ENCODE measurements at regions of chrX and their contacts with region 1.

Region 1: GRCh38 chrX:71181910-71182799 is 37.5 kb downstream of the NLGN3 start:
- DNase-seq: peak; percentile 92
- H3K4me3 ChIP-seq: peak overlapping the region; percentile 44 to 52 (median 46)
- H3K27ac ChIP-seq: peak overlapping the region; percentile 71
- H3K4me1 ChIP-seq: no peaks in the 10 kb centered on the region
- H3K27me3 ChIP-seq: no peaks in the 10 kb centered on the region
- CTCF ChIP-seq: no peak

Region 2: GRCh38 chrX:69948276-69948797 is 1233.8 kb before region 1 on chrX:
- CTCF ChIA-PET with region 1: no interaction called
- dilution Hi-C with region 1: no loop called
- in situ Hi-C with region 1: no loop called
- intact Hi-C with region 1: no loop called
- DNase-seq: no peak
- H3K4me3 ChIP-seq: no peak overlapping the region
- H3K27ac ChIP-seq: no peak overlapping the region
- H3K4me1 ChIP-seq: no peaks in the 10 kb centered on the region
- H3K27me3 ChIP-seq: no peaks in the 10 kb centered on the region
- CTCF ChIP-seq: no peak

Region 3: GRCh38 chrX:70454441-70455365 is 727.5 kb before region 1 on chrX:
- CTCF ChIA-PET with region 1: no interaction called
- dilution Hi-C with region 1: no loop called
- in situ Hi-C with region 1: no loop called
- intact Hi-C with region 1: loop called (anchors 10 kb)
- DNase-seq: peak; percentile 77
- H3K4me3 ChIP-seq: peak overlapping the region; percentile 47 to 63 (median 58)
- H3K27ac ChIP-seq: no peak overlapping the region
- H3K4me1 ChIP-seq: peaks cover 12% of the 10 kb centered on the region
- H3K27me3 ChIP-seq: no peaks in the 10 kb centered on the region
- CTCF ChIP-seq: peak; percentile 87 to 89

Region 4: DNA sequence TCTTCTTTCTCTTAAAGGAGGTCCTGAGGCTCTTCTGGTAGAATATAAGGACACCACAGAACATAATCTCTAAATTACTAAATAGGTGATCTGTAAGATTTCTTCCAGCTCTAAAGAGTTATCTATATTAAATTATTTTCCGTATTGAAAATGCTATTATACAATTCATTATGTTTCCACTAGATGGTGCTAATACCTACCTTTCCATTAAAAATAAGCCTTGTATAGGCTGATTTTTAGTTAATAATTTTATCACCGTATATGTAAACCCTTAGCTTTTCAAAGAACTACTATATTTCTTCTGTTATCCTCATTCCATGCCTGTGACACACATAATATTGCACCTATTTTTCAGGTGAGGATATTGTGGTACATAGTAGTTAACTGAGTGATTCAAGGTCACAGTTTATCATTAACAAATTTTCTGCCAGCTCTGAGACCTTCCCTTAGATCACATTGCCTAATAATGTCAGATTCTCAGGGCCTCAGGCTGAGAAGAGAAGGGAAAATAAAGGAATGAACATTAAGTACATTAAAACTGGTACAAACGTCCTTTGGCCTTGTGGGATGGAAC is 412.4 kb before region 1 on chrX:
- CTCF ChIA-PET with region 1: no interaction called
- dilution Hi-C with region 1: no loop called
- in situ Hi-C with region 1: loop called in 1 of 2 experiments (anchors 25 kb)
- intact Hi-C with region 1: loop called (anchors 1 kb)
- DNase-seq: no peak
- H3K4me3 ChIP-seq: no peak overlapping the region
- H3K27ac ChIP-seq: no peak overlapping the region
- H3K4me1 ChIP-seq: no peaks in the 10 kb centered on the region
- H3K27me3 ChIP-seq: no peaks in the 10 kb centered on the region
- CTCF ChIP-seq: peak; percentile 37 to 43

Region 5: DNA sequence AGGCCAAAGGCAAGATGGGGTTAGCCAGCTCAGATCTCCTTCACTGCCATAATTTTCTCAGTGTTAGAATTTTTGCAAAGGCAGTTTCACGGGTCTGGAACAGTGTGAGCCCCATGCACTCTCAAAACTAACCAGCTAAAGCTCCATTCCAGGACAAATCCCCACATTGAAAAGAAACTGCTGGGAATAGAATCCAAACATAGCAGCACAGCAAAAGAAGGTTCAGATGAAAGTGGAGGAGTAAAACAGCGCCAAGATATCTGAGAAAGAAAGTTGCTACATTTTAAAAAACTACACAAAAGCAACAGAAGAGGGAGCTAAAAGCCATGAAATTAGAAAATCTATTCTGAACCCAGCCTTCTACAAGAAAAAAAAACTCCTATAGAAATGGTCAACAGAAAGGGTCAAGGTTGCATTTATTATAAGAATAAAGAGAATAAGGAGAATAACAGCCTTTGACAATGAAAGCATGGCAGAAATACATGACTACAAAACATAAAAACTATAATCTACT is 211.6 kb before region 1 on chrX:
- CTCF ChIA-PET with region 1: no interaction called
- dilution Hi-C with region 1: no loop called
- in situ Hi-C with region 1: loop called in 1 of 2 experiments (anchors 25 kb)
- intact Hi-C with region 1: loop called (anchors 1 kb)
- DNase-seq: peak; percentile 7
- H3K4me3 ChIP-seq: no peak overlapping the region
- H3K27ac ChIP-seq: no peak overlapping the region
- H3K4me1 ChIP-seq: no peaks in the 10 kb centered on the region
- H3K27me3 ChIP-seq: no peaks in the 10 kb centered on the region
- CTCF ChIP-seq: peak; percentile 28 to 29

Region 6: DNA sequence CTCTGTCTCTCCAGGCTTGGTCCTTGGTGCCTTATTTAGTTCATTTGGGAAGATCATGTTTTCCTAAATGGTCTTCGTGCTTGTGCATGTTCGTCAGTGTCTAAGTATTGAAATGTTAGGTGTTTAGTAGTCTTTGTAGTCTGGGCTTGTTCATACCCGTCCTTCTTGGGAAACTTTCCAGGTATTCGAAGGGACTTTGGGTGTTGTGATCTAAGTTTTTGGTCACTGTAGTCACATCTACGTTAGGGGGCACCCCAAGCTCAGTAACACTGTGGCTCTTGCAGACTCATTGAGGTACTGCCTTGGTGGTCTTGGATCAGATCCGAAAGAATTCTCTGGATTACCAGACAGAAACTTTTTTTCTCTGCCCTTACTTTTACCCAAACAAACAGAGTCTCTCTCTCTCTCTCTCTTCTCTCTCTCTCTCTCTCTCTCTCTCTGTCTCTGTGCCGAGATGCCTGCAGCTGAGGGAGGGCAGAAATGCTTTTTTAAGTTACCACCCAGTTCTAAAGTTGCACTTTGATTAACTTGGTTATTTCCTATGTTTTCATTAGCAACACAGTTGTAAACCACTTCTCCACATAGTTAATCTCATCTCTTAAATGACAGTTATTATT is 183.6 kb before region 1 on chrX:
- CTCF ChIA-PET with region 1: no interaction called
- dilution Hi-C with region 1: no loop called
- in situ Hi-C with region 1: loop called in 1 of 2 experiments (anchors 25 kb)
- intact Hi-C with region 1: loop called (anchors 1 kb)
- DNase-seq: peak; percentile 84
- H3K4me3 ChIP-seq: no peak overlapping the region
- H3K27ac ChIP-seq: no peak overlapping the region
- H3K4me1 ChIP-seq: no peaks in the 10 kb centered on the region
- H3K27me3 ChIP-seq: no peaks in the 10 kb centered on the region
- CTCF ChIP-seq: peak; percentile 21 to 48

Region 7: DNA sequence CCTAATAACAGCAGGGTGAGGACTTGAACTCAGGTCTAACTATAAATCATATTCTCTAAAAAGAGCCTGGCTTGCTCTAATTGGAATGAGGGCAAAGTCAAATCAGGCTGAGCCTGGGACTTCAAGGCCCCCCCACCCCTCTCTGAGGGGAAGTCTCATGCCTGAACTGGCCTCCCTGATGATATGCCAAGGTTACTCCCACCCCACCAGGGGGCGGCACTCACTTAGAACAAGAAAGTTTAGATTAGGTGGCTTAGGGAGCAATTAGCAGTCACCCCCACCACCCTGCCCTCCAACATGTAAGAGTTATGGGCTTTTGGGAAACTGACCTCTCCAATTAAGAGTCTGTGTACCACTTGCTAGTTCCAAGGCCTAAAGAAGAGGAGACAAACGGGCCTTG is 83.9 kb before region 1 on chrX:
- CTCF ChIA-PET with region 1: no interaction called
- dilution Hi-C with region 1: no loop called
- in situ Hi-C with region 1: no loop called
- intact Hi-C with region 1: no loop called
- DNase-seq: no peak
- H3K4me3 ChIP-seq: no peak overlapping the region
- H3K27ac ChIP-seq: no peak overlapping the region
- H3K4me1 ChIP-seq: peaks cover 5% of the 10 kb centered on the region
- H3K27me3 ChIP-seq: no peaks in the 10 kb centered on the region
- CTCF ChIP-seq: peak; percentile 5 to 47

Region 8: DNA sequence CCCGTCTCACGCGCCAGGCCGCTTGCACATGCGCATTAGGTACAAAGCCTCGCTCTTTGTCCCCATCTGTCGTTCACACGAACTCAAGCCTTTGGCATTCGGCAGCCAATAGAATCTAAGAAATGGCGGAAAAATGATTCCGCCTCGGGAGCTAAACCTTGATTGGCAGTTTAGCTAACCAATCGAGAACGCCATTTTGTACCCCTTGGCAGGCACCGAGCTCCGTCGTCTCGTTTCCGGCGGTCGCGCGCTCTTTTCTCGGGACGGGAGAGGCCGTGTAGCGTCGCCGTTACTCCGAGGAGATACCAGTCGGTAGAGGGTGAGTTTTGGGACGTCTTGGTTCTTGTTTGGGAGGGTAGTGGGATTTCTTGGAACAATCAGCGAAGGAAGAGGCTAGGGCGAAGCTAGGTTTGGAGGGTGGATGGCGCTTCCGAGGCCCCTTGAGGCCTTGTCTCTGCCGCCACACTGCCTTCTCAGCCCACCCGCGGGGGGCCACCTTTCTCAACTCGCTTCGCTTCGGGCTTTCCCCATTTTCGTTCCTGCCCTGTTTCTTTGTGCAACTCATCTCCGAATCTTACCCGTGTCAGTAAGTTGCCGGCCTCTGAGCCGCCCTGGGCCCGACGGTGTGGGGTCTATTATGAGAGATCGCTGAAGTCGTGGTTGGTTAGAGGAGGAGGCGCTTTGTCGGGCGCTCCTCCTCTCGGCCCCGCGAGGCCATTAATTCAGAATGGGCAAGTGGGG is 101.4 kb after region 1 on chrX and contains the start of gene NONO:
- CTCF ChIA-PET with region 1: interaction called, 3 read pairs
- dilution Hi-C with region 1: no loop called
- in situ Hi-C with region 1: no loop called
- intact Hi-C with region 1: loop called (anchors 10 kb)
- DNase-seq: peak; percentile 97
- H3K4me3 ChIP-seq: peak within 1 kb of the TSS; percentile 60 to 78 (median 77)
- H3K27ac ChIP-seq: peak within 1 kb of the TSS; percentile 88
- H3K4me1 ChIP-seq: peaks cover 2% of the 10 kb centered on the region
- H3K27me3 ChIP-seq: no peaks in the 10 kb centered on the region
- CTCF ChIP-seq: peak in 1 of 2 donors; percentile 27
- total RNA-seq, gene NONO: 274 to 294 TPM

Region 9: GRCh38 chrX:71301195-71301924 is 119.2 kb after region 1 on chrX and contains the start of gene ITGB1BP2:
- CTCF ChIA-PET with region 1: no interaction called
- dilution Hi-C with region 1: no loop called
- in situ Hi-C with region 1: no loop called
- intact Hi-C with region 1: no loop called
- DNase-seq: no peak
- H3K4me3 ChIP-seq: no peak within 1 kb of the TSS
- H3K27ac ChIP-seq: no peak within 1 kb of the TSS
- H3K4me1 ChIP-seq: no peaks in the 10 kb centered on the region
- H3K27me3 ChIP-seq: no peaks in the 10 kb centered on the region
- CTCF ChIP-seq: no peak
- total RNA-seq, gene ITGB1BP2: 1.0 to 1.4 TPM

Region 10: GRCh38 chrX:71365876-71366673 is 183.9 kb after region 1 on chrX and contains the start of gene TAF1:
- CTCF ChIA-PET with region 1: no interaction called
- dilution Hi-C with region 1: no loop called
- in situ Hi-C with region 1: no loop called
- intact Hi-C with region 1: loop called (anchors 10 kb)
- DNase-seq: peak; percentile 95
- H3K4me3 ChIP-seq: peak within 1 kb of the TSS; percentile 64 to 76 (median 64)
- H3K27ac ChIP-seq: peak within 1 kb of the TSS; percentile 87
- H3K4me1 ChIP-seq: no peaks in the 10 kb centered on the region
- H3K27me3 ChIP-seq: no peaks in the 10 kb centered on the region
- CTCF ChIP-seq: no peak
- total RNA-seq, gene TAF1: 19.0 to 35.6 TPM

Measured in mammary epithelial cell (primary cell).